Lower leg skin (tissue), 4 donors: ENCODE measurements at regions of chr13 and their contacts with region 1.

Region 1: GRCh38 chr13:34086281-34086680 is 268.3 kb downstream of the RFC3 start:
- DNase-seq: no peak
- H3K4me3 ChIP-seq: no peak overlapping the region
- CTCF ChIP-seq: no peak
- POLR2A ChIP-seq: no peak

Region 2: GRCh38 chr13:33931397-33932311 is 154.6 kb before region 1 on chr13:
- intact Hi-C with region 1: no loop called
- DNase-seq: no peak
- H3K4me3 ChIP-seq: no peak overlapping the region
- CTCF ChIP-seq: no peak
- POLR2A ChIP-seq: no peak

Region 3: GRCh38 chr13:35157143-35157755 is 1071.0 kb after region 1 on chr13:
- intact Hi-C with region 1: loop called (anchors 10 kb)
- DNase-seq: peak in 1 of 2 donors; percentile 31
- H3K4me3 ChIP-seq: no peak overlapping the region
- CTCF ChIP-seq: no peak
- POLR2A ChIP-seq: no peak